ENCODE measurements at regions of chr7 and their contacts with region 1.

Region 1: DNA sequence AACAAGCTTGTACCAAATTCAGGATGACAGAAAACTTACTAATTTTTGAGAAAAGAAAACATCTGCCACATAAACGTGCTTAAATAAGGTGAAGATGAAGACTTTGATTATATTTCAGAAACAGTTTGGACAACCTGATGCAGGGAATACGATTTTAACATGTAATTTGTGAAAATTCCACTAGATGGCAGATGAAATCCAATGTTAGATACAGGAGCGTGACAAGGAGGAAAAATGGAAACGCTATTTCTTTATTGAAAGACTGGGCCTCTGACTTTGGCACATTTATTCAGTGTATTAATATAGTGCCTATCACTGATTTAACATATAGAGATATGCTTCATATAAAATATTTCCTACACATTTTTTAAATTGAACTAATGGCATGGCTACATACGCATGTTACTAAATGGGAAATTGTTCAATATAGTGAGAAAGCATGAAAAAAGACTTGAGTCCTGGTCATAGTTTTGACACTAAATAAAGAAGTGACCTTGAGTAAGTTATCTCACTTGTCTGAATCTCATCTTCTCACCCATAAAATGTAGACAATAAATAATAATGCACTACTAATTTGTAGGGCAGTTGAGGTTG is 60.7 kb downstream of the CD36 start:
- DNase-seq: no peak
- ATAC-seq: peak; percentile 80
- H3K4me3 ChIP-seq: no peak overlapping the region
- H3K27ac ChIP-seq: no peak overlapping the region
- H3K4me1 ChIP-seq: peaks cover 0 to 2% of the 10 kb centered on the region in 2 donors
- H3K27me3 ChIP-seq: no peaks in the 10 kb centered on the region

Region 2: DNA sequence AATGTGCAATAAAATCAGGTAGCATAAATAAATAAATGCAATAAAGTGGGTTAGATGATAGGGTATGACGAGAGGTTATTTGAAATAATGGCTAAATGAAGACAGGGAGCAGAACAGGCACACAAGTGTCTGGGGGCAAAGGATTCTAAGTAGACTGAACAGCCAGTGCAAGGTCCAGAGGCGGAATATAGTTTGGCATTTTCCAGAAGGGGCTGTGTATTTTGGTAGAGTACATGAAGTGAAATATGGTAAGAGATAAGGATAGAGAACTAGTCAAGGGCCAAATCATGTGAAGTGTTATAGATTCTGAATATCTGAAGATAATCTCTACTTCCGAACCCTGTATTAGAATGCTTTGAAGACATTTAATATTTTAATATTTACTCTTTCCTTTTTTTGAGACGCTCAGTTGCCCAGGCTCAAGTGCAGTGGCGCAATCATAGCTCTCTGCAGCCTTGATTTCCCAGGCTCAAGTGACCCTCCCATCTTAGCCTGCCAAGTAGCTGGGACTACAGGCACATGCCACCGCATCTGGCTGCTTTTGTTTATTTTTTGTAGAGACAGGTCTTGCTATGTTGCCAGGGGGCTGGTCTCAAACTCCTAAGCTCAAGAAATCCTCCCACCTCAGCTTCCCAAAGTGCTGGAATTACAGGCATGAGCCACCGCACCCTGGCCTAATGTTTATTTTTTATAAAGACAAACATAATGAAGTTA is 105.1 kb before region 1 on chr7:
- intact Hi-C with region 1: no loop called
- DNase-seq: no peak
- ATAC-seq: no peak
- H3K4me3 ChIP-seq: no peak overlapping the region
- H3K27ac ChIP-seq: no peak overlapping the region
- H3K4me1 ChIP-seq: no peaks in the 10 kb centered on the region
- H3K27me3 ChIP-seq: no peaks in the 10 kb centered on the region

Region 3: GRCh38 chr7:81256991-81257390 is 557.8 kb after region 1 on chr7:
- intact Hi-C with region 1: loop called (anchors 2 to 5 kb)
- DNase-seq: no peak
- ATAC-seq: peak; percentile 79
- H3K4me3 ChIP-seq: no peak overlapping the region
- H3K27ac ChIP-seq: no peak overlapping the region
- H3K4me1 ChIP-seq: no peaks in the 10 kb centered on the region
- H3K27me3 ChIP-seq: no peaks in the 10 kb centered on the region

Region 4: GRCh38 chr7:81469869-81470723 is 771.0 kb after region 1 on chr7:
- intact Hi-C with region 1: loop called (anchors 2 kb)
- DNase-seq: peak; percentile 78 to 87
- ATAC-seq: peak; percentile 82
- H3K4me3 ChIP-seq: no peak overlapping the region
- H3K27ac ChIP-seq: no peak overlapping the region
- H3K4me1 ChIP-seq: no peaks in the 10 kb centered on the region
- H3K27me3 ChIP-seq: no peaks in the 10 kb centered on the region